ENCODE measurements at regions of chr15 and their contacts with region 1.

Region 1: DNA sequence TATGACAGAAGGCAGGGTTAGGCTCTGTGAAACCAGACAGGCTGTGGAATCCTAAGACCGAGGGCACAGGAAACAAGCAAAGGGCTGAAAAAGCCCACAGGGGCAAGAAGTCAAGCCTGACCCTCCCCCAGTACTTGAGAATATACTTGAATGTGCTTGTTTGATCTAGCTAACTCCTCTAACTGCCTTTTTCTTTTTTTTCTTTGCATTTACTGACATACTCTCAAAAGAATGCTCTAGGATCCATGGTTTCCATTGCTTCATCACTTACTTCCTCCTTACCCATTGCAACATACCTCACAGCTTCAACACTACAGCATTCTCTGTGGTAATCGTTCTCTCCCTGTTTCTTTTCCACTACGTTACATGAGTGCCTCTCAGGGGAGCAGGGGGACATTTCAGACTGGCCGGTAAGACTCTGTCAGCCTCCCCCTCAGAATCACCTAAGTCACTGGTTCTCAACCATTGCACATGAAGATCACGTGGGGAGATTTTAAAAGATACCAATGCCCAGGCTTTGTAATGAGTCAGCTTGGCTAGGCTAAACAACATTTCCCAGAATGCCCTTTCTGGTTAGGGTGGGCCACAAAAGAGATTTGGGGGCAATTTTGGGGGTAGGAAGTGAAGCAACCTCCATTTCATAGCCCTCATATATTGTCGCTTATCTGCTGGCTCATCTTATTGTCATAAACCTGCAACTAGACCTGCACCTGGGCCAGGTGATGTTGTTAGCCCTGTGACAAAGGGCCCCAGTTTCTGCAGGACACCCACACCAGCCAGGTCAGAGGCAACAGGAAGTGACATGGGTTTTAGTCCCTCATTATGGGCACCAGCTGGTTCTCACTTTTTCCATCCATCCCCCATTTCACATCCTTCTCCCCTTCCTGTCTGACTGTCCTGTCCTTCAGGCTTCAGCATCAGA is 24.6 kb upstream of the RSL24D1 start:
- DNase-seq: peak; percentile 96
- ATAC-seq: peak; percentile 84
- H3K4me3 ChIP-seq: peak overlapping the region; percentile 11; the same call in 1 of the 2 replicates
- H3K27ac ChIP-seq: peak overlapping the region; percentile 96
- H3K4me1 ChIP-seq: peaks cover 11% of the 10 kb centered on the region
- H3K27me3 ChIP-seq: no peaks in the 10 kb centered on the region
- CTCF ChIP-seq: no peak
- POLR2A ChIP-seq: peak; percentile 34; the same call in 1 of the 2 replicates
- RAD21 ChIP-seq: no peak

Region 2: DNA sequence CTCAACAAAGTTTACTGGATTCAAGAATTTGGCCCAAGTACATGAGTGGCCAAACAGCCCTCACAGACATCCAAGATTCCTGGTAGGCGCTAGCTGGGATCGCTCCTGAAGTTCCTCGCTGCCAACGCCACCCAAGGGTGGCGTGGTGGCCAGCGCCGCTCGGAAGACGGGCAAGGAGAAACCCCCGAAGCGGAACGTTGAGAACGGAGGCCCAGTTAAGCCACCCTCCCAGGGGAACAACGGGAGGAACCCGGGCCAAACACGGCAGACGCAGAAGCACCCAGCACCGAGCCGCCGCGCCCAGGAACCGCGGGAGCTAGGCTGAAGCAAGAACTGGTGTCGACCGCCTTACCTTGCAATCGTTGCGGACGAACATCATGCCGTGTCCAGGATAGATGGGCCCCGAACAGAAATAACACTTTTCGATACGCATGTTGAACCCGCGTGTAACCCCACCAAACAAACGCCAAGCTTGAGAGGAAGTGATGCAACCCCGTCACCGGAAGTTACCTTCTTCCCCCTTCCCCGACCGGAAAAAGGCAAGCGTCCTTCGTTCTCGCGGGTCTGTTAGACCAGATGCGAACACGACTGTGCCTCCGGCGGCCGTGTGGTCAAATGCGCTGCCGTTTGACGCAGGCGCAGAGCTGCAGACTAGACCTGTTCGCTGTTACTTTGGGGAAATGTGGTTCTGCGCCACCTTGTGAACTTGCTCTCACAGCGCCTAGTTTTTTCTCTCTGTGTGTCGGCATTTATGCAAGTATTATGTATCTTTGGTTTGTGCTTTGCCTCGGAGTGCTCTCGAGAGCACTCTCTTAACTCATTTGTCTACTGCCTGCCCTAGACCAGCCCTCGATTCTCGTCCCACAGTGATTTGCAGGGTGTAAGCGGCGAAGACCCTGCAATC is 24.6 kb before region 1 on chr15 and contains the start of gene RSL24D1:
- CTCF ChIA-PET with region 1: no interaction called
- POLR2A ChIA-PET with region 1: no interaction called
- dilution Hi-C with region 1: no loop called
- in situ Hi-C with region 1: no loop called
- intact Hi-C with region 1: loop called (anchors 2 kb)
- DNase-seq: peak; percentile 99
- ATAC-seq: peak; percentile 99
- H3K4me3 ChIP-seq: peak within 1 kb of the TSS; percentile 80
- H3K27ac ChIP-seq: peak within 1 kb of the TSS; percentile 91
- H3K4me1 ChIP-seq: no peaks in the 10 kb centered on the region; the same call in 1 of the 2 replicates
- H3K27me3 ChIP-seq: no peaks in the 10 kb centered on the region
- CTCF ChIP-seq: peak; percentile 32; the same call in 1 of the 2 replicates
- POLR2A ChIP-seq: peak; percentile 85
- RAD21 ChIP-seq: no peak
- total RNA-seq, gene RSL24D1: 36.7 and 89.2 TPM in 2 replicates

Region 3: DNA sequence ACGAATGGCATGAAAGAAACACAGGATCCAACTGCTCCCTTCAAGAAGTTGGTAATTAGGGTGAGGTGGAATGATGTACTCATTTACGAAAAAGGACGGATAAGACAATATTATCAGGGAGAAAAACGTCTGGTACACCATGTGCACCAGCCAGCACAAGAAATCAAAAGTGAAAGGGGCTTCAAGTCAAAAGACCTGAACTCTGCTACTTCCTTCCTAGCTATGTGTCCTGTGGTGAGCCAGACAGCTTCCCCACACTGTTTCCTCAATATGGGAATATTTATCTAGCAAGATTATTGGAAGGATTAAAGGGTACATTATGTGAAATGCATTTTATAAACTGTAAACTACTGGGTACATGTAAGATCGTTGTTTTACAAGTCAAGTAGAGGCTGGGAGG is 34.4 kb after region 1 on chr15:
- CTCF ChIA-PET with region 1: no interaction called
- POLR2A ChIA-PET with region 1: no interaction called
- dilution Hi-C with region 1: no loop called
- in situ Hi-C with region 1: no loop called
- intact Hi-C with region 1: loop called (anchors 5 kb)
- DNase-seq: no peak
- ATAC-seq: no peak
- H3K4me3 ChIP-seq: no peak overlapping the region
- H3K27ac ChIP-seq: no peak overlapping the region
- H3K4me1 ChIP-seq: peaks cover 25% of the 10 kb centered on the region
- H3K27me3 ChIP-seq: no peaks in the 10 kb centered on the region
- CTCF ChIP-seq: no peak
- POLR2A ChIP-seq: no peak
- RAD21 ChIP-seq: no peak

Region 4: GRCh38 chr15:55279746-55280351 is 58.5 kb after region 1 on chr15:
- CTCF ChIA-PET with region 1: no interaction called
- POLR2A ChIA-PET with region 1: no interaction called
- dilution Hi-C with region 1: no loop called
- in situ Hi-C with region 1: loop called (anchors 5 kb)
- intact Hi-C with region 1: no loop called
- DNase-seq: peak; percentile 95
- ATAC-seq: peak; percentile 66
- H3K4me3 ChIP-seq: no peak overlapping the region
- H3K27ac ChIP-seq: no peak overlapping the region
- H3K4me1 ChIP-seq: peaks cover 13% of the 10 kb centered on the region
- H3K27me3 ChIP-seq: no peaks in the 10 kb centered on the region
- CTCF ChIP-seq: no peak
- POLR2A ChIP-seq: no peak
- RAD21 ChIP-seq: no peak

Region 5: DNA sequence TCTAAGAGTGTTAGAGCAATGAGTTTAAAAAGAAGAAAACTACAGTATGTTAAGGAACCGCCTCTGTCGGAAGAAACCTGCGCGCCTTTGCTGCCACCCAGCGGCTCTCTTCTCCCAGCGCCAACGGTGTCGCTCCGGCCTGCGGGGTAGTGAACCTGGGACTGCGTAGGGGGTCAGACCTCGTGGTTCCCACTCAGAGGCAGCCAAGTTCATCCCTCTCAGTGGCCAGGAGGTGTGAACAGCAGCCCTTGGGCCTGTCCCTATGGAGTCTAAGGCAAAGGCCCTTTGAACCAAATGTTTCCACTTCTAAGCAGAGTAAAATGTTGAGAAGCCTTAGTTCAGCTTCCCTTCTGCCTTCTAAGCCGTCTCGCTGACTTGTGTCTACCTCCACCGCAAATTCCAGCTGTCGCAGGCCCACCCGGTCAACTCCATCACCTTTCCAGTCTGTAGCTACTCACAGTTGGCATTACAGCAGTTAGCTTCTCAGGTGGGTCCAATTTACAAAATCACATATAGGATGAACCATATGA is 69.2 kb after region 1 on chr15:
- CTCF ChIA-PET with region 1: interaction called, 7 read pairs
- POLR2A ChIA-PET with region 1: no interaction called
- dilution Hi-C with region 1: no loop called
- in situ Hi-C with region 1: no loop called
- intact Hi-C with region 1: loop called (anchors 1 kb)
- DNase-seq: peak; percentile 70
- ATAC-seq: peak; percentile 91
- H3K4me3 ChIP-seq: peak overlapping the region; percentile 68
- H3K27ac ChIP-seq: no peak overlapping the region; the same call in 1 of the 2 replicates
- H3K4me1 ChIP-seq: no peaks in the 10 kb centered on the region
- H3K27me3 ChIP-seq: no peaks in the 10 kb centered on the region
- CTCF ChIP-seq: peak; percentile 96
- POLR2A ChIP-seq: no peak
- RAD21 ChIP-seq: peak; percentile 97

Region 6: DNA sequence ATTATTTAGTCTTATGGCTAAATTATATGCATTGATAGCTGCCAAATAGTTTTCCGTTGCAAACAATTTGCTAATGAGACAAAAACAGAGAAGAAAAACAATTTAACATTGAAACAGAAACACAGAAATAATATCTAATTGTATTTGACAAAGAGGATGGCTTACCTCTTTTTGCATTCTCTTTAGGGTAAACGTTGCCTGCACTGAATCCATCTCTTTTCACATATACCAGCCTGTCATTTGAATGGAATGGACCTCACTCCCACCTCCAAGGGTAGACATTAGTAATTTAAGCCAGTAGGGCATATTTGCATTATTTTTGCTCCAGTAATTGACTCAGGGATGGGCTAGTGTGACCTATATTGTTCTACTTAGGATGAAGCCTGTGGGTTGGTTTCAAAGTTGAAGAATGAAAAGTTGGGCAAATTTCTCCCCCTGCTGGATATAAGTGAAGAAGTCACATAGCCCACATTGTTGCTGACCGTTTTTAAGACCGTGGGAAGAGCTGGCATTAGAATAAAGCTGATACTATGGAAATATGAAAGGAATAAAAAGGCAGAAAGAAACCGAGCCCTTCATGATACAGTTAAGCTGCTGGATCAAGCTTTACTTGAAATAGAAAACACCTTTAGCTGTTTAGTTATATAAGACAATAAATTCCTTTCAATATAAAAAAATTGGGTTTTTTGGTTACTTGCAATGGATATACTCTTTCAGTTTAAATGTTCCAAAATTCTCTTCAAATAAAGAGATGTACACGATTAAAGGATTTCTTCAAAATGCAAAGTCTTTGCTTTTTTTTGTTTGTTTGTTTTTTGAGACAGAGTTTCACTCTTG is 213.9 kb after region 1 on chr15:
- CTCF ChIA-PET with region 1: interaction called, 5 read pairs
- POLR2A ChIA-PET with region 1: no interaction called
- dilution Hi-C with region 1: no loop called
- in situ Hi-C with region 1: loop called (anchors 5 kb)
- intact Hi-C with region 1: loop called (anchors 1 kb)
- DNase-seq: peak; percentile 64
- ATAC-seq: peak; percentile 93
- H3K4me3 ChIP-seq: no peak overlapping the region
- H3K27ac ChIP-seq: no peak overlapping the region
- H3K4me1 ChIP-seq: no peaks in the 10 kb centered on the region
- H3K27me3 ChIP-seq: no peaks in the 10 kb centered on the region
- CTCF ChIP-seq: peak; percentile 70
- POLR2A ChIP-seq: no peak
- RAD21 ChIP-seq: peak; percentile 68

Measured in IMR-90 (cell line).